WTC11 (cell line): ENCODE measurements at regions of chr5 and their contacts with region 1.

Region 1: GRCh38 chr5:114065912-114066311 is 296.0 kb upstream of the KCNN2 start:
- DNase-seq: no peak
- ATAC-seq: no peak
- H3K4me3 Mint-ChIP-seq: no peak overlapping the region
- H3K27ac Mint-ChIP-seq: no peak overlapping the region
- H3K4me1 Mint-ChIP-seq: peaks cover 25% of the 10 kb centered on the region
- H3K27me3 Mint-ChIP-seq: no peaks in the 10 kb centered on the region
- CTCF ChIP-seq: no peak

Region 2: GRCh38 chr5:114055318-114056184 is 10.4 kb before region 1 on chr5:
- CTCF ChIA-PET with region 1: interaction called, 10 read pairs
- POLR2A ChIA-PET with region 1: no interaction called
- DNase-seq: peak; percentile 76
- ATAC-seq: peak; percentile 91
- H3K4me3 Mint-ChIP-seq: peak overlapping the region; percentile 76
- H3K27ac Mint-ChIP-seq: no peak overlapping the region
- H3K4me1 Mint-ChIP-seq: peaks cover 25% of the 10 kb centered on the region
- H3K27me3 Mint-ChIP-seq: peaks cover 40% of the 10 kb centered on the region
- CTCF ChIP-seq: no peak